ENCODE measurements at regions of chr17 and their contacts with region 1.

Region 1: GRCh38 chr17:76353599-76354316 is at the start of gene PRPSAP1:
- DNase-seq: peak; percentile 72
- ATAC-seq: peak; percentile 98
- H3K4me3 ChIP-seq: peak within 1 kb of the TSS; percentile 66
- H3K27ac ChIP-seq: peak within 1 kb of the TSS; percentile 91
- H3K4me1 ChIP-seq: peaks cover 13% of the 10 kb centered on the region
- H3K27me3 ChIP-seq: no peaks in the 10 kb centered on the region
- CTCF ChIP-seq: peak in 1 of 3 experiments; percentile 28; a peak in 1 of 6 replicates
- EP300 ChIP-seq: 0 out of 4 replicates have a peak, but pooled peaks of 1 of the 2 experiments have one; percentile 13
- POLR2A ChIP-seq: peak; percentile 99
- RAD21 ChIP-seq: no peak
- polyA plus RNA-seq, gene PRPSAP1: 26.9 to 34.7 TPM

Region 2: GRCh38 chr17:76365256-76365903 is 11.6 kb after region 1 on chr17:
- CTCF ChIA-PET with region 1: interaction called, 13 read pairs
- POLR2A ChIA-PET with region 1: no interaction called
- RAD21 ChIA-PET with region 1: no interaction called
- SMC1A ChIA-PET with region 1: interaction called, 7 read pairs
- in situ Hi-C with region 1: no loop called
- intact Hi-C with region 1: no loop called
- DNase-seq: no peak
- ATAC-seq: no peak
- H3K4me3 ChIP-seq: no peak overlapping the region
- H3K27ac ChIP-seq: no peak overlapping the region
- H3K4me1 ChIP-seq: no peaks in the 10 kb centered on the region
- H3K27me3 ChIP-seq: no peaks in the 10 kb centered on the region; a peak in 1 of 4 replicates
- CTCF ChIP-seq: peak; percentile 18 to 29 (median 24); a peak in 5 of 6 replicates
- EP300 ChIP-seq: no peak
- POLR2A ChIP-seq: no peak
- RAD21 ChIP-seq: peak; percentile 44; the same call in 1 of the 2 replicates